HepG2 (cell line): ENCODE measurements at regions of chr13 and their contacts with region 1.

Region 1: DNA sequence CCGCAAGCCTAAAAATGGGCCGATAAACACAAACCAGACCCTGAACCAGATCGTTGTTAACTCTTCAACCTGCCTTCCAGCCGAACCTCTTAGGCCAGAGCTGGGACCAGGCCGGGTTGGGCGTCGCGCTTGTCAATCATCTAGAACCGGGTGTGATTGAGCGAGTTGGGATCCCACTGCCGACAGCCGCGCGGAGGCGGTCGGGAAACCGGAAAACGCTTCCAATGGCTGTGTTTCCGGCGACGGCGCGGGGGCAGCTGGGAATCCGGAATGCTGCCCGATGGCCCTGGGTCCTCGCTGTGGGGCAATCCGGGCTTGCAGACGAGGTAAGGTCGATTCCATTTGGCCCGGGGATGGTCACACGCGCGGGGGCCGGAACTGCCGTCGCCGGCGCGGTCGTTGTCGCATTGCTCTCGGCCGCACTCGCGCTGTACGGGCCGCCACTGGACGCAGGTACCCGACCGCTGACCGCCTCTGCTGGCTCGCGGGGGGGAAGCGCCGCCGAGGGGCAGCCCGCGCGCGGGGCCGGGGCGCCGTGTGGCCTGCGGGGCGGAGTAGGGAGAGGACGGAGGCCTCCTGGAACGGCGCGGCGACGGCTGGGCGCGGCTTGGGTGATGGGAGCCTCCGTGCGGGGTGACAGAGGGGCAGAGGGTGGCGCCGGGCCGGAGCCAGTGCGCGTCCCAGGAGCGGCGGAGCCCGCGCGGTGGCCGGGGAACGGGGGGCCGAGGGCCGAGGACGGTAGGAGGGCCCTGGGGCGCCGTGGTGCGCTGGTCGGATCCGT is at the start of gene NAXD:
- DNase-seq: peak; percentile 89
- ATAC-seq: peak; percentile 95
- H3K4me3 ChIP-seq: peak within 1 kb of the TSS; percentile 96 to 97 (median 97)
- H3K27ac ChIP-seq: peak within 1 kb of the TSS; percentile 83
- H3K4me1 ChIP-seq: peaks cover 62% of the 10 kb centered on the region
- H3K27me3 ChIP-seq: peaks cover 1 to 13% of the 10 kb centered on the region in 2 experiments; a peak in 3 of 5 replicates
- CTCF ChIP-seq: no peak; the same call in 1 of the 2 replicates
- EP300 ChIP-seq: 0 out of 4 replicates have a peak, but pooled peaks of 1 of the 2 experiments have one; percentile 15
- POLR2A ChIP-seq: peak; percentile 73 to 83
- RAD21 ChIP-seq: peak; percentile 19; the same call in 1 of the 2 replicates
- total RNA-seq, gene NAXD: 18.5 and 19.0 TPM in 2 replicates

Region 2: DNA sequence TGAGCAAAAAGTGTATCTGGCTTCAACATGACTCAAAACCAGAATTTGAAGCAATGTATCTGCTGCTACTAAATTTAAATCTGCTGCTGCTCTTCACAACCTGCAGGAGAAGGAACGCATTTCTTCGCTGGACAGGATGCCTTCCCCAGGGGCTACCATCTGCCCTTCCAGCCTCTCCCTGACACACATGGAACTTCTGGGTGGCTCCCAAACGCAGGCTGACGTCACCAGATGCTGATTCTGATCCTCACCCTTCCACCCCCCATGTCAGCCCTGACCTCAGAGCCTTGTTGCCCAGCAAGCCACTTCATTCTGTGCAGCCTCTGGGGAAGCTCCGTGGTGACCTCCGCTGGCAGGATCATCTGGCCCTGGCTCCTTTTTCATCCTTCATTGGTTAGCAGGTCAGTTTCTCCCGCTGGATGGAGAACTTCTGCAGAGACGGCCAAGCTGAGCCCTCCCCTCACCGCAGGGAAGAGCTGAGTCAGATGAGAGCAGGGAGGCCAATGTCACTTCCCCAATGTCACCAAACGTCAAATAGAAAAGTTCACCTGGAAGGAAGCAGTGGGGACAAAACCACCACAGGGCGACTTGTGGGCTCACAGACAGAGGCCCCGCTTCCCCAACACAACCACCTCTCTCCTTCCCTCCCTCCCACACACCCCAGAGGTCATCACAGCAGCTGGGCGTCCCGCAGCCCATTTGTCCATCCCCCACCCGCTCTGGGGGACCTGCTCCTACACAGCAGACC is 40.0 kb before region 1 on chr13:
- CTCF ChIA-PET with region 1: no interaction called
- POLR2A ChIA-PET with region 1: interaction called, 8 read pairs
- in situ Hi-C with region 1: no loop called
- intact Hi-C with region 1: loop called (anchors 1 kb)
- DNase-seq: peak; percentile 20
- ATAC-seq: peak; percentile 54
- H3K4me3 ChIP-seq: no peak overlapping the region
- H3K27ac ChIP-seq: peak overlapping the region; percentile 47
- H3K4me1 ChIP-seq: peaks cover 41% of the 10 kb centered on the region
- H3K27me3 ChIP-seq: peaks cover 0 to 6% of the 10 kb centered on the region in 2 experiments; a peak in 1 of 5 replicates
- CTCF ChIP-seq: peak; percentile 72
- EP300 ChIP-seq: no peak
- POLR2A ChIP-seq: no peak
- RAD21 ChIP-seq: no peak

Region 3: GRCh38 chr13:110600261-110600819 is 15.2 kb before region 1 on chr13:
- CTCF ChIA-PET with region 1: no interaction called
- POLR2A ChIA-PET with region 1: interaction called, 10 read pairs
- in situ Hi-C with region 1: no loop called
- intact Hi-C with region 1: no loop called
- DNase-seq: no peak
- ATAC-seq: peak; percentile 91
- H3K4me3 ChIP-seq: peak overlapping the region in 2 of 3 experiments; percentile 25 to 49; a peak in 4 of 6 replicates
- H3K27ac ChIP-seq: no peak overlapping the region
- H3K4me1 ChIP-seq: peaks cover 33% of the 10 kb centered on the region
- H3K27me3 ChIP-seq: no peaks in the 10 kb centered on the region
- CTCF ChIP-seq: no peak
- EP300 ChIP-seq: no peak
- POLR2A ChIP-seq: no peak
- RAD21 ChIP-seq: no peak

Region 4: GRCh38 chr13:110715395-110716235 is 100.1 kb after region 1 on chr13:
- CTCF ChIA-PET with region 1: no interaction called
- POLR2A ChIA-PET with region 1: interaction called, 19 read pairs
- in situ Hi-C with region 1: no loop called
- intact Hi-C with region 1: loop called (anchors 2 kb)
- DNase-seq: peak; percentile 99
- ATAC-seq: peak; percentile 75
- H3K4me3 ChIP-seq: peak overlapping the region; percentile 76 to 98 (median 96)
- H3K27ac ChIP-seq: peak overlapping the region; percentile 89
- H3K4me1 ChIP-seq: peaks cover 16% of the 10 kb centered on the region
- H3K27me3 ChIP-seq: no peaks in the 10 kb centered on the region; a peak in 1 of 5 replicates
- CTCF ChIP-seq: peak; percentile 31; the same call in 1 of the 2 replicates
- EP300 ChIP-seq: no peak
- POLR2A ChIP-seq: no peak; a peak in 1 of 4 replicates
- RAD21 ChIP-seq: no peak; the same call in 1 of the 2 replicates